ENCODE measurements at regions of chr10 and their contacts with region 1.

Region 1: GRCh38 chr10:79374312-79375191 is 27.3 kb downstream of the PPIF start:
- DNase-seq: peak; percentile 59 to 94
- H3K4me3 ChIP-seq: no peak overlapping the region
- H3K27ac ChIP-seq: no peak overlapping the region
- H3K4me1 ChIP-seq: no peaks in the 10 kb centered on the region
- H3K27me3 ChIP-seq: no peaks in the 10 kb centered on the region; a peak in 2 of 7 replicates
- CTCF ChIP-seq: peak; percentile 86 to 97 (median 92)
- EP300 ChIP-seq: no peak
- POLR2A ChIP-seq: no peak
- RAD21 ChIP-seq: peak; percentile 99 to 100

Region 2: GRCh38 chr10:79347226-79347893 is 27.2 kb before region 1 on chr10 and contains the start of gene PPIF:
- CTCF ChIA-PET with region 1: interaction called, 14 read pairs
- POLR2A ChIA-PET with region 1: no interaction called
- DNase-seq: peak; percentile 64 to 98
- H3K4me3 ChIP-seq: peak within 1 kb of the TSS; percentile 54 to 77 (median 58)
- H3K27ac ChIP-seq: peak within 1 kb of the TSS; percentile 43; the same call in 1 of the 2 replicates
- H3K4me1 ChIP-seq: peaks cover 0 to 14% (median 6%) of the 10 kb centered on the region in 4 experiments; a peak in 6 of 7 replicates
- H3K27me3 ChIP-seq: no peaks in the 10 kb centered on the region
- CTCF ChIP-seq: peak; percentile 76 to 90 (median 83)
- EP300 ChIP-seq: no peak
- POLR2A ChIP-seq: peak in 1 of 2 experiments; percentile 67; a peak in 1 of 3 replicates
- RAD21 ChIP-seq: peak; percentile 59 to 68
- total RNA-seq, gene PPIF: 70.2 and 74.9 TPM in 2 replicates

Region 3: DNA sequence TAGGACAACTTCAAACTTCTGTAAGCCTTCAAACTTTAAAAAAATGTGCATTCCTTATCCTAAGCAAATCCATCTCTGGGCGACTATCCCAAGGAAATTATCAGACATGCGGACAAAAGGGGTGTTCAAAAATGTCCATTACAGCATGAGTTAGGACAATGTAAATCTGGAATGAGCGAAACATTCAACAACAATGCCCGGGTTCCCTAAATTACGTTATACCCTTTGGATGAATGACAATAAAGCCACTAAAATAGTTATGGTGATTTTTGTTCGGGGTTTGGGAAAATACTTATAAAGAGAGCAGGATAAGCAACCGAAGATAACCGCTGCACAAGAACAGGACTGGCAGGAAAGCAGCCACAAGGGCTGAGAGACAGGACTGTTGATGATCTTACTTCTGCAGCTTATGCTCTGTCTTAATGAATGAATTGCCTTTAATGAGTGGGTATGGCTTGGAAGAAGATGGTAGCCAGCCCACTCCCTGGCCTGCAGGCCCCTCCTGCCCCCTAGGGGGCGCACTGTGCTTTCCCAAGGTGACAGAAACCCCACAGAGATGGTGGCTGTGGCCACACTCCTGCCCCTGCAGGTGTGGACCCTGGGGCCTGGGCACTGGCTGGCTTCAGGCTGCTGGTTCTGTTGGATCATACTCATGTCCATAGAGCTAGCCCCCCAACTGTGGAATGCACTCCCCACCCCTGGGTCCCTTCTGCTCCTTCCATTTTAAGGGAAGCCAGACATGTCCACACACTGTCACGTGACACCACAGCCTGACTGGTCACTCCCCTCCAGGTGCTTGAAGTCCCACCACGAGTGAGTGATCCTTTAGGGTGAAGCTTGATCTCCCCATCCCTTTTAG is 25.8 kb after region 1 on chr10:
- CTCF ChIA-PET with region 1: interaction called, 67 read pairs
- POLR2A ChIA-PET with region 1: no interaction called
- DNase-seq: peak in 1 of 2 experiments; percentile 89
- H3K4me3 ChIP-seq: no peak overlapping the region
- H3K27ac ChIP-seq: no peak overlapping the region
- H3K4me1 ChIP-seq: peaks cover 8 to 30% (median 15%) of the 10 kb centered on the region in 4 experiments
- H3K27me3 ChIP-seq: no peaks in the 10 kb centered on the region; a peak in 1 of 7 replicates
- CTCF ChIP-seq: peak; percentile 80 to 95 (median 86)
- EP300 ChIP-seq: no peak
- POLR2A ChIP-seq: no peak
- RAD21 ChIP-seq: peak; percentile 69 to 78

Region 4: GRCh38 chr10:79445141-79445976 is 70.8 kb after region 1 on chr10 and contains the start of gene ZCCHC24:
- CTCF ChIA-PET with region 1: interaction called, 15 read pairs
- POLR2A ChIA-PET with region 1: interaction called, 3 read pairs
- DNase-seq: peak; percentile 92 to 94
- H3K4me3 ChIP-seq: peak within 1 kb of the TSS; percentile 49 to 68 (median 60)
- H3K27ac ChIP-seq: no peak within 1 kb of the TSS
- H3K4me1 ChIP-seq: peaks cover 6 to 21% (median 10%) of the 10 kb centered on the region in 4 experiments; a peak in 5 of 7 replicates
- H3K27me3 ChIP-seq: peaks cover 0 to 44% (median 30%) of the 10 kb centered on the region in 4 experiments; a peak in 6 of 7 replicates
- CTCF ChIP-seq: no peak
- EP300 ChIP-seq: no peak
- POLR2A ChIP-seq: peak in 1 of 2 experiments; percentile 70; a peak in 2 of 3 replicates
- RAD21 ChIP-seq: no peak
- total RNA-seq, gene ZCCHC24: 6.2 and 6.9 TPM in 2 replicates

Region 5: DNA sequence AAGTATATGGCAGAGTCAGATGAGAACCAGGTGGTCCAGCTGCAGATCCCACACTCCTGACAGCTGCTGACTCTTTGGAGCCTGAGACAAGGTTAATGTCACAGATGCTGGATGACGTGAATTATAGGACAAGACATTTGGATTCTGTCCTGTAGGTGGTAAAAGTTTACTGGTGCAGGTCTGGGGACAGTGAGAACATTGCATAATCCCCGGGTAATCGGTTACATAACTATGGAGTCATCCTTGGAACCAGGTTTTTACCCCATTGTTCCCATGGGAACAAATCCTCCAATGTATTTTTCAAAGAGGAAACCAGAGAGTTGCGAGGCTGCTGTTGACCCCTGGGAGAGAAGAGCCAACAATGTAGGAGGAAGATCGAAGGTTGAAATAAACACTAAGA is 98.4 kb after region 1 on chr10:
- CTCF ChIA-PET with region 1: interaction called, 62 read pairs
- POLR2A ChIA-PET with region 1: no interaction called
- DNase-seq: no peak
- H3K4me3 ChIP-seq: no peak overlapping the region
- H3K27ac ChIP-seq: no peak overlapping the region
- H3K4me1 ChIP-seq: peaks cover 0 to 4% (median 0%) of the 10 kb centered on the region in 4 experiments; a peak in 1 of 7 replicates
- H3K27me3 ChIP-seq: no peaks in the 10 kb centered on the region
- CTCF ChIP-seq: no peak
- EP300 ChIP-seq: no peak
- POLR2A ChIP-seq: no peak
- RAD21 ChIP-seq: no peak

Region 6: GRCh38 chr10:79487296-79488194 is 113.0 kb after region 1 on chr10:
- CTCF ChIA-PET with region 1: interaction called, 79 read pairs
- POLR2A ChIA-PET with region 1: no interaction called
- DNase-seq: peak; percentile 80 to 83
- H3K4me3 ChIP-seq: no peak overlapping the region
- H3K27ac ChIP-seq: no peak overlapping the region
- H3K4me1 ChIP-seq: peaks cover 0 to 3% (median 0%) of the 10 kb centered on the region in 4 experiments; a peak in 1 of 7 replicates
- H3K27me3 ChIP-seq: peaks cover 0 to 4% (median 0%) of the 10 kb centered on the region in 4 experiments; a peak in 2 of 7 replicates
- CTCF ChIP-seq: peak; percentile 86 to 94 (median 90)
- EP300 ChIP-seq: no peak
- POLR2A ChIP-seq: no peak
- RAD21 ChIP-seq: peak; percentile 83 to 86